IMR-90 (cell line): ENCODE measurements at regions of chr14 and their contacts with region 1.

Region 1: DNA sequence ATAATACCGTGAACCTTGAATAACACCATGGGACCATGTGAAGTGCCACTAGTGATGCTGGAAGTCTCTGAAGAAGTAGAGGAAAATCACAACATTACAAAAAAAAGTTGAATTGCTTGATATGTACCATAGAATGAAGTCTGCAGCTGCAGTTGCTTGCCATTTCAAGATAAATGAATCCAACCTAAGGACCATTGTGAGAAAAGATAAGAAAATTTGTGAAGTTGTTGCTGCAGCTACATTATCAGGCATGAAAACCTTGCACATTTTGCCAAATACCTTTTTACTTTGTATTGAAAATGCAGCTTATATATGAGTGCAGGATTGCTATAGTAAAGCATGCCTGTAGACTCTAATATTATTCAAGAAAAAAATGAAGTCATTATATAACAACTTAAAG is 126.5 kb downstream of the NUBPL start:
- DNase-seq: no peak
- ATAC-seq: no peak
- H3K4me3 ChIP-seq: no peak overlapping the region
- H3K27ac ChIP-seq: no peak overlapping the region
- H3K4me1 ChIP-seq: no peaks in the 10 kb centered on the region
- H3K27me3 ChIP-seq: no peaks in the 10 kb centered on the region
- CTCF ChIP-seq: no peak
- POLR2A ChIP-seq: no peak
- RAD21 ChIP-seq: no peak

Region 2: DNA sequence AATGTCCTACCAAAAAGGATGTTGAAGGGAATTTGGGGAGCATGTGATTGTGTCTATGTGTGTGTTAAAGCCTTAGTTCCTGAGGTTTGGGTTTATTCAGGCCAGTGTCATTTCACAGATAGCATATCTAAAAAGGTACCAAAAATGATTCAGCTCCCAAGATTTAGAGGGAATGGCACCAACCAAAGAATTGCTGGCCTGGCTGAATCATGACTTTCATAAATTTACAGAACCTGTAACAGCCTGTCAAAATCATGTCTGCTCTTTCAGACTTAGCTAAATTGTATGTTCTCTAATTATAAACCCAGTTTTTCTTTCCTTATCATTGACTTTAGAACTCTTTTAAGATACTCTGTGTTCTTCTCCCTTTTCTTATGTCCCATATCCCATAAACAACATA is 105.0 kb after region 1 on chr14:
- CTCF ChIA-PET with region 1: no interaction called
- POLR2A ChIA-PET with region 1: no interaction called
- dilution Hi-C with region 1: no loop called
- in situ Hi-C with region 1: no loop called
- intact Hi-C with region 1: no loop called
- DNase-seq: no peak
- ATAC-seq: no peak
- H3K4me3 ChIP-seq: no peak overlapping the region
- H3K27ac ChIP-seq: no peak overlapping the region
- H3K4me1 ChIP-seq: no peaks in the 10 kb centered on the region
- H3K27me3 ChIP-seq: no peaks in the 10 kb centered on the region
- CTCF ChIP-seq: no peak
- POLR2A ChIP-seq: no peak
- RAD21 ChIP-seq: no peak

Region 3: DNA sequence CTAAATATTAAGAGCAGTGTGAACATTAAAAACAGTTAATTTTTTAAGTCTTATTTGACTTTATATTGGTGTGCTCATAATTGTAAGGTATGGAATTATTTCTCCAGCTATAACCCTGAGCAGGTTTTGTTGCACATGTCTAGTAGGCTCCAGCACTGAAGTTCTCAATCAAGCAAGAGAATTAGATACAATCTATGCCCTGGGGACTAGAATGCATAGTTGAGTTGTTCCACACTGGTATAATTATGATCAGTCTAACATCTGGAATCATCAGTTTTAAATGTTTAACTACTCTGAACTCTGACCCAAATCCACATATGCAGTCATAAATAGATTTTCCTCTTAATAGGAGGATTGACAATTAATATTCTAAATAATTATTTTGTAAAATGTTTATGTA is 131.6 kb after region 1 on chr14:
- CTCF ChIA-PET with region 1: no interaction called
- POLR2A ChIA-PET with region 1: no interaction called
- dilution Hi-C with region 1: no loop called
- in situ Hi-C with region 1: no loop called
- intact Hi-C with region 1: no loop called
- DNase-seq: no peak
- ATAC-seq: no peak
- H3K4me3 ChIP-seq: no peak overlapping the region
- H3K27ac ChIP-seq: no peak overlapping the region
- H3K4me1 ChIP-seq: no peaks in the 10 kb centered on the region
- H3K27me3 ChIP-seq: no peaks in the 10 kb centered on the region
- CTCF ChIP-seq: no peak
- POLR2A ChIP-seq: no peak
- RAD21 ChIP-seq: no peak

Region 4: GRCh38 chr14:32478050-32478449 is 790.3 kb after region 1 on chr14:
- CTCF ChIA-PET with region 1: no interaction called
- POLR2A ChIA-PET with region 1: interaction called, 10 read pairs
- dilution Hi-C with region 1: no loop called
- in situ Hi-C with region 1: no loop called
- intact Hi-C with region 1: no loop called
- DNase-seq: no peak
- ATAC-seq: no peak
- H3K4me3 ChIP-seq: no peak overlapping the region
- H3K27ac ChIP-seq: 0 out of 2 replicates have a peak overlapping the region, but pooled peaks have one; percentile 10
- H3K4me1 ChIP-seq: peaks cover 24% of the 10 kb centered on the region
- H3K27me3 ChIP-seq: no peaks in the 10 kb centered on the region
- CTCF ChIP-seq: no peak
- POLR2A ChIP-seq: no peak
- RAD21 ChIP-seq: no peak